ENCODE measurements at regions of chr13 and their contacts with region 1.

Region 1: GRCh38 chr13:51645154-51645650 is 60.9 kb downstream of the WDFY2 start:
- DNase-seq: peak; percentile 78
- H3K4me3 Mint-ChIP-seq: peak overlapping the region; percentile 52
- H3K27ac Mint-ChIP-seq: peak overlapping the region; percentile 95
- H3K4me1 Mint-ChIP-seq: peaks cover 39% of the 10 kb centered on the region
- H3K27me3 Mint-ChIP-seq: no peaks in the 10 kb centered on the region
- CTCF ChIP-seq: no peak

Region 2: GRCh38 chr13:51523082-51523518 is 122.1 kb before region 1 on chr13:
- CTCF ChIA-PET with region 1: no interaction called
- POLR2A ChIA-PET with region 1: interaction called, 5 read pairs
- intact Hi-C with region 1: loop called (anchors 1 kb)
- DNase-seq: peak; percentile 96
- H3K4me3 Mint-ChIP-seq: peak overlapping the region; percentile 25
- H3K27ac Mint-ChIP-seq: no peak overlapping the region
- H3K4me1 Mint-ChIP-seq: peaks cover 25% of the 10 kb centered on the region
- H3K27me3 Mint-ChIP-seq: no peaks in the 10 kb centered on the region
- CTCF ChIP-seq: no peak

Region 3: GRCh38 chr13:51625555-51626345 is 19.5 kb before region 1 on chr13:
- CTCF ChIA-PET with region 1: interaction called, 3 read pairs
- POLR2A ChIA-PET with region 1: interaction called, 14 read pairs
- intact Hi-C with region 1: no loop called
- DNase-seq: peak; percentile 83
- H3K4me3 Mint-ChIP-seq: no peak overlapping the region
- H3K27ac Mint-ChIP-seq: peak overlapping the region; percentile 63
- H3K4me1 Mint-ChIP-seq: peaks cover 54% of the 10 kb centered on the region
- H3K27me3 Mint-ChIP-seq: no peaks in the 10 kb centered on the region
- CTCF ChIP-seq: no peak

Region 4: DNA sequence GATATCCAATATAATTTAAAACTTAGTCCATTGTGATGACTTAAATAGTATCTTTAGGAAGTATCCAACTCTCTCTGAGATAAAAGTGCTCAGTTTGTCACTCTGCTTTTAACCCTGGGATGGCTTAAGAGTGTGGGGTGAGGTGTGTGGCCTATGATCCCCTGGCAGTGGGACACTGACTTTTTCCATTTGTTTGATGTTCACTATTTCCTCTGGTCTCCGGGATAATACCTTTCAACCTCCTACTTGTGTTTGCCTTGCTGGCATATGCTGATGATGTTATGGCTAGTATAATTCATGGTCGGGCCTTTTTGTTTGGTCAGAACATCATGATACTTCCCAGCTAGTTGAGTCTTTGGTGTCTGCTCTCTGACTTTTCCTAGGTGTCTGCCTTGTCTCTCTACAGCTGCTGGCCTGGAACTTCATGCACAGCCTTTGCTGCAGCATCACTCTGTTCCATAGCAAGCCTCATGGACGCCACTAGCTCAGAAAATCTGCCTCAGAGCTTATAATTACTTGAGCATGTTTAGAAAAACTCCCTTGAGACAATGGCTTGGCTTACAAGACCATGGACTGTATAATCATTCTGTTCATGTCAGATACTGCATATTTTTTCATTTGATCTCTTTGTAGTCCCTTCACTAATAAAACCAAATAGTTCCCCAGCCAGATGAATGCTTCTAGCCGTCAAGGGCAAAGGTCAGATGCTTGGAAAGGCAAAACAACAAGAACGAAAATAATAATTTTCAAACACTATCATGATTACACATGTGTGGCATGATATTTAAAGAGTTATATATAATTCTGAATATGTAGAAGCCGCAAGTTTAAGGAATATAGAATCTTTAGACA is 14.3 kb after region 1 on chr13:
- CTCF ChIA-PET with region 1: interaction called, 3 read pairs
- POLR2A ChIA-PET with region 1: interaction called, 11 read pairs
- intact Hi-C with region 1: no loop called
- DNase-seq: no peak
- H3K4me3 Mint-ChIP-seq: no peak overlapping the region
- H3K27ac Mint-ChIP-seq: peak overlapping the region; percentile 59
- H3K4me1 Mint-ChIP-seq: peaks cover 9% of the 10 kb centered on the region
- H3K27me3 Mint-ChIP-seq: no peaks in the 10 kb centered on the region
- CTCF ChIP-seq: no peak

Region 5: DNA sequence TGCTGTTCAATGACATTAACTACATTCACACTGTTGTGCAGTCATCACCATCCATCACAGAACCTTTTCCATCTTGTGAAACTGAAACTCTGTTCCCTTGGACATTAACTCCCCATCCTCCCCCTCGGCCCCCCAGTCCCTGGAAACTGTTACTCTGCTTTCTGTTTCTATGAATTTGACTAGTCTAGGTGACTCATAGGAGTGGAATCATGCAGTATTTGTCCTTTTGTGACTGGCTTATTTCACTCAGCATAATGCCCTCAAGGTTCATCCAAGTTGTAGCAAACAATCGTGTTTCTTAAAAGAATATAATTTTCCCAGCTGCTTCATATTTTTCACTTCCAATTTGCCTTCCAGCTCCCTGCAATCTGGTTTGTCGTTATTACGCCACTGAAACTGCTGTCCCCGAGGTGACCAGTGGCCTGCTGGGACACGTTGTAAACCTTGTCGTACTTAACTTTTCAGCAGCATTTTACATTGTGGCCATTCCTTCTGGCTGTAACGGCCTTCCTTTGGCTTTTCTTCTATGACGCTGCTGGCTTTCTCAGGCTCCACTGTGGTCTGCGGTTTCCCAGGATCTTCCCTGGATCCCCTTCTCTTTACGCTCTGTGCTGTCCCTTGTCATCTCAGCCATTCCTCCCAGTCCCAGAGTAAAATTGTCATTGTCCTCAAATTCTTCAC is 84.8 kb after region 1 on chr13:
- CTCF ChIA-PET with region 1: no interaction called
- POLR2A ChIA-PET with region 1: interaction called, 5 read pairs
- intact Hi-C with region 1: loop called (anchors 2 kb)
- DNase-seq: peak; percentile 75
- H3K4me3 Mint-ChIP-seq: no peak overlapping the region
- H3K27ac Mint-ChIP-seq: no peak overlapping the region
- H3K4me1 Mint-ChIP-seq: peaks cover 23% of the 10 kb centered on the region
- H3K27me3 Mint-ChIP-seq: no peaks in the 10 kb centered on the region
- CTCF ChIP-seq: no peak

Region 6: DNA sequence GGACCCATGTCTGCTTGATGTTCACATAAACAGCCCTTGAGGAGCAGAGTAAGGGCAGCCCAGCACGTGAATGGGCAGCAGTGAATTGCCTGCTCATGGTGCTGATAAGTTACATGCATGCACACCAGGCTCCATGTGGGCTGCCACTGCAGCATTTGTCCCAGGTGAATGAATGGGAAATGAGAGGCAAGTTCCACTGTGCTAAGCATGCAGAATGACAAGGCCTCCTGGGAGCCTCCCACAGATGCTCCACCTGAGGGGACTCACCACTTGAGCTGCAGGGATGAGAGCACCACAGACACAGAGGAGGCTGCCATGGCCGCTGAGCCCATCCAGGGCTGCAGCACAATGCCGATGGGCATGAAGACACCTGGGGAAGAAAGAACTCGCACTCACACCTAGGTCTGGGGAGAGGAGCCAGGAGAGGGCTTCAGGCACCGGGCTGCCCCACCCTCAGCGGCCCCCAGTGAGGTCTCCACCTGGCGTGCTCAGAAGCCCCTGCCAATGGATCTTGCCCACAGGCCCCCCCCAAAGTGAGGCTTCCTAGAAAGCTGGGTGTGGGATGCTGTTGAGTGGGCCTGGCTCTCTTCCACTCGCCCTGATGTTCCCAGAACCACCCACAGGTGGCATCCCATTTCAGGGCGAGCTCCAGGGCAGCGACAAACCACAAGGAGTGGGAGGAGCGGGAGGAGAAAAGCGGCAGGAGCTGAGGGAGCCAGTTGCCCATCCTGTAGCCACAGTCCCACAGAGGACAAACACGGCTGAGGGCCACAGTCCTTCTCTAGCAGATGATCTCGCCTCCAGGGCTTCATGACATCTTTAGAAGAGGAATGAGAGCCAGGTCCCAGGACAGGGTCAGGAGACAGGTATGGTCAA is 290.4 kb after region 1 on chr13:
- CTCF ChIA-PET with region 1: no interaction called
- POLR2A ChIA-PET with region 1: no interaction called
- intact Hi-C with region 1: no loop called
- DNase-seq: peak; percentile 50
- H3K4me3 Mint-ChIP-seq: no peak overlapping the region
- H3K27ac Mint-ChIP-seq: no peak overlapping the region
- H3K4me1 Mint-ChIP-seq: no peaks in the 10 kb centered on the region
- H3K27me3 Mint-ChIP-seq: no peaks in the 10 kb centered on the region
- CTCF ChIP-seq: peak; percentile 29

Measured in MCF 10A (cell line).